ENCODE measurements at regions of chr7 and their contacts with region 1.

Region 1: DNA sequence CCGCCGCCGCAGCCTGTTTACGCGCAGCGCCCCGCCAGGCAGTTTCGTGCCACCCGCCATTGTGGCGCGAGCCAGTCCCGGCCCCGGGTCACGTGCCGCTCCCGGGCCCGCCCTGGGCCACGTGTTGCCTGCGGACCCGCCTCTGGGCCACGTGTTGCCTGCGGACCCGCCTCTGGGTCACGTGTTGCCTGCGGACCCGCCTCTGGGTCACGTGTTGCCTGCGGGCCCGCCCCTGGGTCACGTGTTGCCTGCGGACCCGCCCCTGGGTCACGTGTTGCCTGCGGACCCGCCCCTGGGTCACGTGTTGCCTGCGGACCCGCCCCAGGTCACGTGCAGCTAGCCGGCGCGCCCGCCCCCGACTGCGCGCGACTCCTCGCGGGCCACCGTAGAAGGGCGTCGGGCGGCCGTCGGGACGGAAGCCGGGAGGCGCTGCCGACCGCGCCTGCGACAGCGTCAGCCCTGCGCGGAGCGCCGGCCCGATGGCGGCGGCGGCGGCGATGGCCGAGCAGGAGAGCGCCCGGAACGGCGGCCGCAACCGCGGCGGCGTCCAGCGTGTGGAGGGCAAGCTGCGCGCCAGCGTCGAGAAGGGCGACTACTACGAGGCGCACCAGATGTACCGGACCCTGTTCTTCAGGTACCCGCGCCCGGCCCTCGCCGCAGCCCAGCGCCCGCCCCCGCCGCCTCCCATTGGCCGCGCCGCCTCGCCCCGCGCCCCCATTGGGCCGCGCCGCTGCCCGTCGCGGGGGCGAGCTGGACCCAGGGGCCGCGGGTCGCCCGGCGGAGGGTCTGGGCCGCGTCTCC is at the start of gene GET4:
- DNase-seq: peak; percentile 92 to 99 (median 97)
- ATAC-seq: peak; percentile 77
- H3K4me3 ChIP-seq: peak within 1 kb of the TSS; percentile 91
- H3K4me3 Mint-ChIP-seq: peak within 1 kb of the TSS; percentile 91
- H3K27ac ChIP-seq: peak within 1 kb of the TSS; percentile 67 to 88
- H3K27ac Mint-ChIP-seq: peak within 1 kb of the TSS; percentile 84
- H3K4me1 ChIP-seq: peaks cover 51% of the 10 kb centered on the region
- H3K4me1 Mint-ChIP-seq: peaks cover 32% of the 10 kb centered on the region
- H3K27me3 ChIP-seq: no peaks in the 10 kb centered on the region
- H3K27me3 Mint-ChIP-seq: no peaks in the 10 kb centered on the region
- CTCF ChIP-seq: no peak
- total RNA-seq, gene GET4: 84.4 to 96.4 TPM

Region 2: DNA sequence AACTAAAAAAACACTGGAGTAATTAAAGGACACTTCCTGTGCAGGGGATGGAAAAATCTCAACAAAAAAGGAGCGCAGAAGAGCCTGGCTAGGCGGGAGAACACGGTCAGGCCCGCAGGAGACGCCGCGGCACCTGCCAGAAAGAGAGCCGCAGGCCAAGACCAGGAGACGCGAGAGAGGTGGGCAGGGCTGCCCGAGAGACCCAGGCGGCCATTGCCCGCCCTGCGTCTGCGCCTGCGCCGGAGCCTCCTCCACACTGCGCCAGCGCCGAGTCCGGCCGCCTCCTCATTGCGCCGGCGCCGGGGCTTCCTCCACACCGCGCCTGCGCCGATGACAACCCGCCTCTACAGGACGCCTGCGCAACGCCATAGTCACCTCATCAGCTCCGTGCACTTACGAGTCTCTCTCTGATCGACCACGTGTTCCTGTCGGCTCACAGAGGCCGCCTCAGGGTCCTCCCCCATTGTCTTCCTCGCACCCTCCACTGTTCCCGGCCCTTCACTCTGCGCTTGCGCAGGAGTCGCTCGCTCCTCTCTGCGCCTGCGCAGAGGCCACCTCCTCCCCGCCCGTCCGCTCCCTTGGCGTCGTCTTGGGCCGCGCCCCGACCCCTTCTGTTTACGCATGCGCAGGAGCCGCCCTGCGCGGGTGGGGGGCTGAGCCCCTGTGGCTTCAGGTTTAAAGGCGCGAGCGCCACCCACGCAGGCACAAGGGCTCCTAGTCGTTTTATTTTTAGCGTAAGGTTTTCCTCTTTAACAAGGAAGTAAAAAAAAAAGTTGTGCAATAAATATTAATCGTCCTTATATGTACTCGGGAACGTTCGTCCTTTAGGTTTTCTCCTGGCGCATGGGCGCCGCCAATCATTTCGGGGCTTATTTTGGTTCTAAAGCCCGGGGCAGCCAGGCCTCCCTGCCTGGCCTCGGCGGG is 727.2 kb before region 1 on chr7:
- CTCF ChIA-PET with region 1: no interaction called
- POLR2A ChIA-PET with region 1: interaction called, 3 read pairs
- intact Hi-C with region 1: loop called in 1 of 2 experiments (anchors 5 kb)
- DNase-seq: peak; percentile 93 to 100 (median 98)
- ATAC-seq: peak; percentile 98
- H3K4me3 ChIP-seq: peak overlapping the region; percentile 60
- H3K4me3 Mint-ChIP-seq: peak overlapping the region; percentile 91
- H3K27ac ChIP-seq: peak overlapping the region; percentile 83 to 91
- H3K27ac Mint-ChIP-seq: peak overlapping the region; percentile 98
- H3K4me1 ChIP-seq: peaks cover 17% of the 10 kb centered on the region
- H3K4me1 Mint-ChIP-seq: peaks cover 20% of the 10 kb centered on the region
- H3K27me3 ChIP-seq: no peaks in the 10 kb centered on the region
- H3K27me3 Mint-ChIP-seq: no peaks in the 10 kb centered on the region
- CTCF ChIP-seq: peak; percentile 12

Region 3: GRCh38 chr7:584122-584465 is 292.3 kb before region 1 on chr7:
- CTCF ChIA-PET with region 1: no interaction called
- POLR2A ChIA-PET with region 1: no interaction called
- intact Hi-C with region 1: loop called in 1 of 2 experiments (anchors 10 kb)
- DNase-seq: peak; percentile 85 to 96 (median 91)
- ATAC-seq: peak; percentile 97
- H3K4me3 ChIP-seq: peak overlapping the region; percentile 72
- H3K4me3 Mint-ChIP-seq: peak overlapping the region; percentile 86
- H3K27ac ChIP-seq: peak overlapping the region; percentile 64 to 86
- H3K27ac Mint-ChIP-seq: peak overlapping the region; percentile 95
- H3K4me1 ChIP-seq: peaks cover 30% of the 10 kb centered on the region
- H3K4me1 Mint-ChIP-seq: peaks cover 44% of the 10 kb centered on the region
- H3K27me3 ChIP-seq: no peaks in the 10 kb centered on the region
- H3K27me3 Mint-ChIP-seq: no peaks in the 10 kb centered on the region
- CTCF ChIP-seq: no peak

Region 4: DNA sequence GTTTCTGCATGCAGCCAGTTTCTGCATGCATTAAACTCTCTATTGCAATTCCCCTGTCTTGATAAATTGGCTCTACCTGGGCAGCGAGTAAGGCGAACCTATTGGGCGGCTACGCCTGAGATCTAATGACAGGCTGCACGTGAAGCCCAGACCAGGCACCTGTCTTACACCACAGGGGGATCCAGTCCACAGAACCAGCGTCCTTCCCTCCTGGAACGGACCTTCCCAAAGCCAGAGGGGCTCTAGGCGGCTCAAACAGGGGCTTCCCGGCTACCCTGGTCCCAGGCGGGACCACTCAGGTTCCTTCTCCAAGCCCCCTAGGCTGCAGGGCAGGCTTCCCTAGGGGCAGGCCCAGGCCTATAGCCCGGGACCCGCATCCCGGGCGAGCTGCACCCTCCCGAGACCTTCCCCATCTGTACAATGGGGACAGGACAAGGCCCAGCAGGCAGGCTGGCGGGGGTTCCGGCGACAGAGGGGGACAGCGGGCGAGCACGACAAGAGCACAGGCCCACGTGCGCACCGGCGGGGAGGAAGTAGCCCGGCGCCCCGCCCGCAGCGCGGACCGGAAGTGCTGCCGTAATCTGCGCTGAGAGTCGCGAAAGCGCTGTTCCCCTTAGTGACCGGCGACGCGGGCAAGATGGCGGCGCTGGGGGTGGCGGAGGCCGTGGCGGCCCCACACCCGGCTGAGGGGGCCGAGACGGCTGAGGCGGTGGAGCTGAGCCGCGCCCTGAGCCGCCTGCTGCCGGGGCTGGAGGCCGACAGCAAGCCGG is 150.1 kb before region 1 on chr7 and contains the start of gene DNAAF5:
- CTCF ChIA-PET with region 1: no interaction called
- POLR2A ChIA-PET with region 1: no interaction called
- intact Hi-C with region 1: loop called in 1 of 2 experiments (anchors 5 kb)
- DNase-seq: peak; percentile 74 to 92 (median 82)
- ATAC-seq: peak; percentile 89
- H3K4me3 ChIP-seq: peak within 1 kb of the TSS; percentile 73
- H3K4me3 Mint-ChIP-seq: peak within 1 kb of the TSS; percentile 86
- H3K27ac ChIP-seq: peak within 1 kb of the TSS; percentile 62 to 64
- H3K27ac Mint-ChIP-seq: peak within 1 kb of the TSS; percentile 36
- H3K4me1 ChIP-seq: peaks cover 21% of the 10 kb centered on the region
- H3K4me1 Mint-ChIP-seq: peaks cover 26% of the 10 kb centered on the region
- H3K27me3 ChIP-seq: no peaks in the 10 kb centered on the region
- H3K27me3 Mint-ChIP-seq: no peaks in the 10 kb centered on the region
- CTCF ChIP-seq: no peak
- total RNA-seq, gene DNAAF5: 4.8 to 6.1 TPM

Region 5: DNA sequence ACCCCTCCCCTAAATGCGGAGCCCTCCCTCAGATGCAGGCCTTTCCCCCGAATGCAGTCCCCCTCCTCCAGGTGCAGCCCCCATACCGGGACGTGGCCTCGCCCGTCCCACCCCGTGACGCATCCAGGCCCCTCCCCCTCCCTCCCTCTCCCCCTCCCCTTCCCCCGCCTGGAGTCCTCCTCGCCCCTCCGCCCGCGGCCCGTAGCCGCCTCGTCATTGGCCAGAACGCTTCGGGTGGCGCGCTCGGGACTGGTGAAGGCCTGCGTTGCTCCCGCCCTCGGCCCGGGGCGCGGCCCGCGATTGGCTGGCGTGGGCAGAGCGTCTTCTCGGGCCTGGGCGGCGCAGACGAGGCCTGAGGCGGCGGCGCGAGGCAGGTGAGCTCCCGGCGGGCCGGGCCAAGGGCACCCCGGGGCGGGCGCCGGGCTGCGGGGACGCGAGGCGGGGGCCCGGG is 60.0 kb before region 1 on chr7:
- CTCF ChIA-PET with region 1: interaction called, 6 read pairs
- POLR2A ChIA-PET with region 1: interaction called, 21 read pairs
- intact Hi-C with region 1: loop called (anchors 1 to 10 kb)
- DNase-seq: peak; percentile 95 to 99 (median 97)
- ATAC-seq: peak; percentile 94
- H3K4me3 ChIP-seq: peak overlapping the region; percentile 64
- H3K4me3 Mint-ChIP-seq: peak overlapping the region; percentile 85
- H3K27ac ChIP-seq: no peak overlapping the region
- H3K27ac Mint-ChIP-seq: peak overlapping the region; percentile 85
- H3K4me1 ChIP-seq: peaks cover 50% of the 10 kb centered on the region
- H3K4me1 Mint-ChIP-seq: peaks cover 67% of the 10 kb centered on the region
- H3K27me3 ChIP-seq: no peaks in the 10 kb centered on the region
- H3K27me3 Mint-ChIP-seq: no peaks in the 10 kb centered on the region
- CTCF ChIP-seq: no peak

Region 6: DNA sequence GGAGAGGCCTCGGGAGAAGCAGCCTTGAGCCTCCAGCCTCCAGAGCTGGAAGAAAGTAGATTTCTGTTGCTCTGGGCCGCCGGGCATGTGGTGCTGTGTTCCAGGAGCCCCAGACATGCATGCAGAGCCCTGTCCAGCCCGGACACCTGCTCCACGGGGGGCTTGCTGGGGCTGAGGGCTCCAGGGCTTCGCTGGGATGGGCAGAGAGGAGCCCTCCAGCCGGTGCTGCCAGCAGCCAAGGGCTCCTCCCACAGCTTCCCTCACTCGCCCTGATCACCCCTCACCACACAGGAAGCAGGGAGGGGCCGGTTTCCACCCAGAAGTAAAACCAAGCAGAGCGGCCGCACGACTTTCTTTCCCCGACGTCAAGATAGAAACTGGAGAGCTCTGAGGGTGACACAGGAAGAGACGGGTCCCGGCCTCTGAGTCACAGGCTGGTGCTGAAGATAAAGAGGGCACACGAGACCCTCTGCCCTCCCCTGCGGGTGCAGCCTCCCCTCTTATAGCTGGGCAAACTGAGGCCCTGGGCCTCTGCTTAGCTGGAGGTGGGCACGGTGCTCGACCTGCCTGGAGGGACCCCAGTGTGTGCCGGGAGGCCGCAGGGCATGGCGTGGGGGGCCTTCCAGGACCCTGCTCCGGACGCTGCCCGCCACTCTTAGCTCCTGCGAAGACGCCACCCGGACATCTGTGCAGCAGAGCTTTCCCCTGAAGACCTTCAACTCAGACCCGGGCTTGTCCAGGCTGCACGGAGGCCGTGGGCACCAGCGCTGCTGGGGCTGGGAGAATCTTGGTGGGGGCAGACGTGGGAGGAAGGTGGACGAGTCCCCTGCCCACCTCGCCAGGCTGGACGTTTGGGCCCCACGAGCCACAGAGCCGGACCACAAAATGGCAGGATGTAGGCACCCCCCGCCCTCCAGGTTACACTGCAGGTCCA is 47.0 kb after region 1 on chr7:
- CTCF ChIA-PET with region 1: interaction called, 4 read pairs
- POLR2A ChIA-PET with region 1: interaction called, 11 read pairs
- intact Hi-C with region 1: no loop called
- DNase-seq: peak; percentile 80 to 97 (median 91)
- ATAC-seq: peak; percentile 92
- H3K4me3 ChIP-seq: peak overlapping the region; percentile 77
- H3K4me3 Mint-ChIP-seq: peak overlapping the region; percentile 90
- H3K27ac ChIP-seq: peak overlapping the region; percentile 89 to 91
- H3K27ac Mint-ChIP-seq: peak overlapping the region; percentile 92
- H3K4me1 ChIP-seq: peaks cover 60% of the 10 kb centered on the region
- H3K4me1 Mint-ChIP-seq: peaks cover 30% of the 10 kb centered on the region
- H3K27me3 ChIP-seq: no peaks in the 10 kb centered on the region
- H3K27me3 Mint-ChIP-seq: no peaks in the 10 kb centered on the region
- CTCF ChIP-seq: no peak

Region 7: GRCh38 chr7:2844165-2844898 is 1968.0 kb after region 1 on chr7 and contains the start of gene GNA12:
- CTCF ChIA-PET with region 1: no interaction called
- POLR2A ChIA-PET with region 1: no interaction called
- intact Hi-C with region 1: loop called in 1 of 2 experiments (anchors 10 kb)
- DNase-seq: peak; percentile 94 to 99 (median 98)
- ATAC-seq: peak; percentile 94
- H3K4me3 ChIP-seq: peak within 1 kb of the TSS; percentile 67
- H3K4me3 Mint-ChIP-seq: peak within 1 kb of the TSS; percentile 93
- H3K27ac ChIP-seq: peak within 1 kb of the TSS in 1 of 2 donors; percentile 5
- H3K27ac Mint-ChIP-seq: peak within 1 kb of the TSS; percentile 76
- H3K4me1 ChIP-seq: peaks cover 20% of the 10 kb centered on the region
- H3K4me1 Mint-ChIP-seq: peaks cover 49% of the 10 kb centered on the region
- H3K27me3 ChIP-seq: no peaks in the 10 kb centered on the region
- H3K27me3 Mint-ChIP-seq: no peaks in the 10 kb centered on the region
- CTCF ChIP-seq: no peak
- total RNA-seq, gene GNA12: 16.0 to 16.1 TPM